Brain microvascular endothelial cell (primary cell): ENCODE measurements at regions of chr6 and their contacts with region 1.

Region 1: DNA sequence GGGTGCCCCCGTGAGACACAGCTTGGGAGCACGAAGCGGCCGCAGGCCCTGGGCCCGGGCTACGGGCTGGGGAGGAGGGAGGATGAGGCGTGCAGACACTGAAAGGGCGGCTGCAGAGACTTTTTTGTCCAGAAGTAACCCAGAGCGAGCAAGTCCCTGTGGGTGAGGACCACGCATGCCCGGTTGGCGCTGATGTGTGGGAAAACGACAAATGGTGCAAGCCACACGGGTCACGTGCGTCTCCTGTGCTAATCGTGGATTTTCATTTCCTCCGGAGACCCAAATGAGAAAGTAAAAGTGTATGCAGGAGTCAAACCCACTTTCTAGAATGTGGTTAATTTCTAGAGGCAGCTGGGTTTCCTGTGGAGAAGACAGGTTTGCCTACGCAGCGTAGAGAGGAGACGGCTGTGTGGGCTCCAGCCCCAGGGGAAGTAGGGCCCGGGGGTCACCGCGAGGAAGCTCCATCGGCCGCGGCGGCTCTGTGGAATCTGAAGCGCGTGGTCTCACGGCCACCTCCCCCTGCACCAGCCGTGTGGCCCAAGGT is 19.0 kb downstream of the DLL1 start:
- DNase-seq: no peak
- H3K4me3 ChIP-seq: no peak overlapping the region
- H3K27ac ChIP-seq: no peak overlapping the region
- H3K27me3 ChIP-seq: no peaks in the 10 kb centered on the region
- CTCF ChIP-seq: no peak

Region 2: DNA sequence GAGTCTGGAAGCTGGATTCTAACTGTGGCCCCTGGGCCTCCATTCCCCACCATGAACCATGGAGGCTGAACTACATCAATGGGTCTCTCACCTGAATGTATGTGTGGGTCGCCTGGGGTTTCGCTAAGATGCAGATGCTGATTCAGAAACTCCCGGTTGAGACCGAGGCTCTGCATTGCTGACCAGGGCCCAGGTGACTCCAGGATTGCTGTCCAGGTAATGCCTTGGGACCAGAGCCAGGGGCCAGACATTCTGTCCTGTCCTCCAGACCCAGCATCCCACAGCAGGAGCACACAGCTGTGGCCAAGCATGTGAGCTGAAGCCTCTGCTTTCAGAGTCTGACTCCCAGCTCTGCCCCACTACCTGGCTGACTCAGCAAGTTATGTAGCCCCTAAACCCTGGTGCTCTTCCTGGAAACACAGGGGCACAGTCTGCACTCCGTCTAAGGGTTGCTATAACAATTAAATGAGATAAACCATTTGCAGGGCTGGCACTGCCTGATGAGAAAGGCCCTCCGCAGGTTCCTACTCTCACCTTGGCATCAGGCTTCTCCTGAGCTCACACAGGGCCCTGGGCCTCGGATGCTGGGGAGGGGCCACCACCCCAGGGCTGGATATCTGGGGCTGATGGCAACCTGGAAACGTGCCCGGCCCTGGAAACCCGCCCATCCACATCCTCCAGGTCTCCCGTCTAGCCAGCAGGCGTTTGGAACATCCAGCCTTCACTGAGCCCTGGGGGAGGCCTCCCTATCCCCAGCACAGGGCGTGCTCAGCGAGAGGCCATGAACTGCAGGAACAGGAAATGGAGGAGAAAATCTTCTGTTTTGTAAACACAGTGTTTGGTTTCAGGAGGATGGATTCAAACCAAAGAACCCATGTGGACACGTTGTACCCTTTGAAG is 156.6 kb before region 1 on chr6:
- in situ Hi-C with region 1: loop called (anchors 25 kb)
- DNase-seq: no peak
- H3K4me3 ChIP-seq: no peak overlapping the region
- H3K27ac ChIP-seq: no peak overlapping the region
- H3K27me3 ChIP-seq: no peaks in the 10 kb centered on the region
- CTCF ChIP-seq: no peak

Region 3: GRCh38 chr6:170575250-170575649 is 303.4 kb after region 1 on chr6:
- in situ Hi-C with region 1: no loop called
- DNase-seq: peak; percentile 20
- H3K4me3 ChIP-seq: no peak overlapping the region
- H3K27ac ChIP-seq: no peak overlapping the region
- H3K27me3 ChIP-seq: no peaks in the 10 kb centered on the region
- CTCF ChIP-seq: peak; percentile 62

Region 4: DNA sequence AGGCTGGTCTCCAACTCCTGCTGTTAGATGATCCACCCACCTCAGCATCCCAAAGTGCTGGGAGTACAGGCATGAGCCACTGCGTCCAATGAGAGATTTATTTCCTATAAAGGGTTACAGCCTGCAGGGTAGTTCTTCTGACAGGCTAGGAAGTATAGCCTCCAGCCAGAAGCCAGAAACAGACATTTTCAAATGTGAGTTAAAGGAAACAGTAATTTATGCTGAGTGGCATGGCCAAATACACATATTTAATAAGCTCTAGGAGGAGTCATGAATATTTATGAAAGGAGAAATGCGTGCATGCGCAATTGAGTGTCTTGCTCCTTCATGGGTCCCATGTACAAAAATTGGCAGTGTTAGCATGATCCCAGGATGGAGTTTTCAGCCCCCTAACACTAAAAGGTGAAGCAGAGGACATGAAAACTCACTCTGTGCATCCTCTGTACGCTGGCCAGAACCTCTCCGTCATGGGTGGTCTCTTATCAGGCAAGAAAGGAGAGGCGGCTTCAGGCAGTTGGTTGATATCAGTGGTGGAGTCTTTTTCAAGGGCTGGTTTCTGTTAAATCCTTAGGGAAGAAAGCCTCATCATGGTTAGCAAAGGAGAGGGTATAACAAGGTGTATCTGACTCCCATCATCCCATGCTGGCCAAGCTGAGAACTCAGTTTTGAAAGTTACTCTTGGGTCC is 333.9 kb after region 1 on chr6:
- in situ Hi-C with region 1: no loop called
- DNase-seq: no peak
- H3K4me3 ChIP-seq: no peak overlapping the region
- H3K27ac ChIP-seq: no peak overlapping the region
- H3K27me3 ChIP-seq: no peaks in the 10 kb centered on the region
- CTCF ChIP-seq: no peak